Tibial artery (tissue), 4 donors: ENCODE measurements at regions of chr9 and their contacts with region 1.

Region 1: GRCh38 chr9:111896353-111896958 is at the start of gene UGCG:
- DNase-seq: peak; percentile 82 to 92
- H3K4me3 ChIP-seq: peak within 1 kb of the TSS; percentile 92 to 94
- H3K27ac ChIP-seq: peak within 1 kb of the TSS; percentile 93 to 94
- H3K4me1 ChIP-seq: peaks cover 0 to 38% (median 19%) of the 10 kb centered on the region in 4 donors
- H3K27me3 ChIP-seq: no peaks in the 10 kb centered on the region
- CTCF ChIP-seq: no peak

Region 2: GRCh38 chr9:111559000-111559610 is 337.4 kb before region 1 on chr9:
- intact Hi-C with region 1: no loop called
- DNase-seq: no peak
- H3K4me3 ChIP-seq: no peak overlapping the region
- H3K27ac ChIP-seq: no peak overlapping the region
- H3K4me1 ChIP-seq: no peaks in the 10 kb centered on the region
- H3K27me3 ChIP-seq: no peaks in the 10 kb centered on the region
- CTCF ChIP-seq: no peak

Region 3: DNA sequence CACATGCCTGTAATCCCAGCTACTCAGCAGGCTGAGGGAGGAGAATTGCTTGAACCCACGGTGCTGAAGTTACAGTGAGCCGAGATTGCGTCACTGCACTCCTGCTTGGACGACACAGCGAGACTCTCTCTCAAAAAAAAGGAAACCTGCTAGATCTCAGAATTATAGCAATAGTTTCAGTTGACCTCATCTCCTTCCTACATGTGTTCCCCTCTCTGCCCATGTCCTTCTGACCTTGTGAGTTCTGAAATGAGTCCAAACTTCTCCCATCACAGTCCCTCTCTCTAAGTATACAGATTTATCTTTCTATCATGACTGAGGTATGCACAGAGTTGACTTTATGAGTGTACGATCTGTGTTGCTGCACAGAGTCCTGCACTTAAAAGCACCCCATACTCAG is 57.1 kb before region 1 on chr9:
- intact Hi-C with region 1: no loop called
- DNase-seq: no peak
- H3K4me3 ChIP-seq: no peak overlapping the region
- H3K27ac ChIP-seq: no peak overlapping the region
- H3K4me1 ChIP-seq: no peaks in the 10 kb centered on the region
- H3K27me3 ChIP-seq: no peaks in the 10 kb centered on the region
- CTCF ChIP-seq: no peak

Region 4: GRCh38 chr9:112061152-112061740 is 164.8 kb after region 1 on chr9:
- intact Hi-C with region 1: loop called (anchors 10 kb)
- DNase-seq: peak; percentile 78 to 80
- H3K4me3 ChIP-seq: no peak overlapping the region
- H3K27ac ChIP-seq: peak overlapping the region; percentile 56 to 67
- H3K4me1 ChIP-seq: peaks cover 0 to 28% (median 12%) of the 10 kb centered on the region in 4 donors
- H3K27me3 ChIP-seq: no peaks in the 10 kb centered on the region
- CTCF ChIP-seq: peak in 1 of 2 experiments; percentile 10

Region 5: DNA sequence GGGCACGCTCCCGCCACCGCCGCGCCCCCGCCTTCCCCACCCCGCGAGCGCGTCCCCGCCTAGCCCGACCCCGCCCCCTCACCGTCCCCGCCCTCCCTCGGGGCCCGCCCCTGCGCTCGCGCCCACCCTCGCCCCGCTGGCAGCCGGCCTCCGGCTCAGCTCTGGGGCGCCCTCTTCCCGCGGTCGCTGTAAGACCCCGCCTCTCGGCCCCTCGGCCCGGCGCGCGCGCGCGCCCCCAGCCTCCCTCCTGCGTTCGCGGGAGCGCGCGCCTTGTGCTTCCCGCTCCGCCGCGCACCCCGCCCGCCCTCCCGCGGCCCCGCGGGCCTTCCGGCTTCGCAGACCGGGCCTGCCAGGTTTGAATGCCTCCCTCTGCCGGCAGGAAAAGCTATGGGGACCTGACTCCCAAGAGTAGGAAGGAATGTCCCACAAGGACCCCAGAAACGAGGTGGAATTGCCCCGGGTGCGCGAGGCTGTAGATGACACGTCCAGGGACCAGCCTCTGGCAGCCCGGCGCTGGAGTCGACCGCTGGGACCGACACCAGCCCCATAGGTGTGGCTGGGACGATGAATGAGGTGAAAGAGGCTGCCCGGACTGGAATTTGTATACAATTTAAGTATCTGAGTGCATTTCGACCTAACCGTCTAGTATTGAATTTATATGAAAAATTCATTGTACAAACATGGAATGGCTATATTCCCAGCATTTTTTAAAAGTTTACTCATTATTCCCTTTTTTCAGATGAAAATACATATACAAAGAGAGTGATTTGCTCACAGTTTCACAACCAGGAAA is 437.4 kb after region 1 on chr9:
- intact Hi-C with region 1: loop called (anchors 5 kb)
- DNase-seq: peak; percentile 92 to 97
- H3K4me3 ChIP-seq: peak overlapping the region; percentile 93 to 99
- H3K27ac ChIP-seq: peak overlapping the region; percentile 97 to 100
- H3K4me1 ChIP-seq: peaks cover 0 to 32% (median 7%) of the 10 kb centered on the region in 4 donors
- H3K27me3 ChIP-seq: no peaks in the 10 kb centered on the region
- CTCF ChIP-seq: peak; percentile 46 to 67